Endothelial cell of umbilical vein (primary cell): ENCODE measurements at regions of chr17 and their contacts with region 1.

Region 1: GRCh38 chr17:1147661-1148060 is 32.1 kb downstream of the ABR start:
- DNase-seq: peak; percentile 80
- H3K4me3 ChIP-seq: no peak overlapping the region
- H3K27ac ChIP-seq: no peak overlapping the region
- H3K4me1 ChIP-seq: no peaks in the 10 kb centered on the region
- H3K27me3 ChIP-seq: no peaks in the 10 kb centered on the region
- CTCF ChIP-seq: peak; percentile 48 to 72
- POLR2A ChIP-seq: no peak

Region 2: GRCh38 chr17:143782-144281 is 1003.8 kb before region 1 on chr17:
- CTCF ChIA-PET with region 1: no interaction called
- POLR2A ChIA-PET with region 1: interaction called, 10 read pairs
- dilution Hi-C with region 1: no loop called
- intact Hi-C with region 1: no loop called
- DNase-seq: peak; percentile 73
- H3K4me3 ChIP-seq: no peak overlapping the region
- H3K27ac ChIP-seq: no peak overlapping the region
- H3K4me1 ChIP-seq: no peaks in the 10 kb centered on the region
- H3K27me3 ChIP-seq: no peaks in the 10 kb centered on the region
- CTCF ChIP-seq: peak; percentile 73 to 87
- POLR2A ChIP-seq: no peak

Region 3: GRCh38 chr17:1137465-1137894 is 10.2 kb before region 1 on chr17:
- CTCF ChIA-PET with region 1: interaction called, 17 read pairs
- POLR2A ChIA-PET with region 1: no interaction called
- dilution Hi-C with region 1: no loop called
- intact Hi-C with region 1: no loop called
- DNase-seq: peak; percentile 34
- H3K4me3 ChIP-seq: no peak overlapping the region
- H3K27ac ChIP-seq: no peak overlapping the region
- H3K4me1 ChIP-seq: peaks cover 8% of the 10 kb centered on the region
- H3K27me3 ChIP-seq: no peaks in the 10 kb centered on the region
- CTCF ChIP-seq: no peak
- POLR2A ChIP-seq: no peak

Region 4: GRCh38 chr17:1164935-1165556 is 17.4 kb after region 1 on chr17:
- CTCF ChIA-PET with region 1: interaction called, 18 read pairs
- POLR2A ChIA-PET with region 1: no interaction called
- dilution Hi-C with region 1: no loop called
- intact Hi-C with region 1: no loop called
- DNase-seq: peak; percentile 29
- H3K4me3 ChIP-seq: no peak overlapping the region
- H3K27ac ChIP-seq: no peak overlapping the region
- H3K4me1 ChIP-seq: peaks cover 14% of the 10 kb centered on the region
- H3K27me3 ChIP-seq: no peaks in the 10 kb centered on the region
- CTCF ChIP-seq: peak; percentile 11 to 25
- POLR2A ChIP-seq: no peak